ENCODE measurements at regions of chr12 and their contacts with region 1.

Region 1: DNA sequence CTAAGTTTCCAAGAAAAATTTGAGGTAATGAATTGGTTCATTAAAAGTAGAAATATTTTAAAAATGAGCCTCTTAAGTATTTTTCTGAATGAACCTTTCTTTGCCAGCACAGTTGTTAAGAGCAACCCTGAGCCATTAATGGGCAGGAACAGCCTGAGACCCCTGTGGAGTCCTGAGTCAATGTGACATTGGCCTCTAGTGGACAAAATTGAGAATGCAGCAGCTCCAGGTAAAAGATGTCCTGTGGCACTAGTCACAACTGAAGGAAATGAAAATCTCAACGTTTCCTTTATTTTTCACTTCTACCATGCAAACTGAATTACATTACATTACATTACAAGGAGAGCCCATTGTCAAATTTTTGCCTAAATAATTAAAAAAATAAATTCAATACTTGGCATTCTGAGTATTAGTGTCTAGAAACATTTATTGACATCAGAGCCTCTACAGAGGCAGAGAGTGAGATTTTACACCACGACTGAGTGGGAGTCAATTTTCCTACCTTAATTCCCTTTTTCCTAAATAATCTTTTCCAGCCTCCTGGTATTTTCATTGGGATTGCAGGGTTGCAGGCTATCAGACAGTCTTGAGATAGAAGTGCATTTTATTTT is 135.7 kb downstream of the PPM1H start:
- DNase-seq: no peak
- H3K4me3 ChIP-seq: no peak overlapping the region
- H3K27ac ChIP-seq: no peak overlapping the region
- H3K4me1 ChIP-seq: peaks cover 0 to 2% (median 0%) of the 10 kb centered on the region in 4 donors
- H3K27me3 ChIP-seq: no peaks in the 10 kb centered on the region
- CTCF ChIP-seq: peak; percentile 44 to 94 (median 87)
- EP300 ChIP-seq: no peak
- POLR2A ChIP-seq: no peak

Region 2: GRCh38 chr12:62435303-62436163 is 363.7 kb before region 1 on chr12:
- intact Hi-C with region 1: loop called (anchors 5 kb)
- DNase-seq: peak; percentile 65
- H3K4me3 ChIP-seq: peak overlapping the region; percentile 19 to 50 (median 42)
- H3K27ac ChIP-seq: no peak overlapping the region
- H3K4me1 ChIP-seq: peaks cover 0 to 15% (median 7%) of the 10 kb centered on the region in 4 donors
- H3K27me3 ChIP-seq: peaks cover 5 to 22% (median 11%) of the 10 kb centered on the region in 3 donors
- CTCF ChIP-seq: peak in 2 of 4 experiments; percentile 17 to 25
- EP300 ChIP-seq: no peak
- POLR2A ChIP-seq: no peak

Region 3: DNA sequence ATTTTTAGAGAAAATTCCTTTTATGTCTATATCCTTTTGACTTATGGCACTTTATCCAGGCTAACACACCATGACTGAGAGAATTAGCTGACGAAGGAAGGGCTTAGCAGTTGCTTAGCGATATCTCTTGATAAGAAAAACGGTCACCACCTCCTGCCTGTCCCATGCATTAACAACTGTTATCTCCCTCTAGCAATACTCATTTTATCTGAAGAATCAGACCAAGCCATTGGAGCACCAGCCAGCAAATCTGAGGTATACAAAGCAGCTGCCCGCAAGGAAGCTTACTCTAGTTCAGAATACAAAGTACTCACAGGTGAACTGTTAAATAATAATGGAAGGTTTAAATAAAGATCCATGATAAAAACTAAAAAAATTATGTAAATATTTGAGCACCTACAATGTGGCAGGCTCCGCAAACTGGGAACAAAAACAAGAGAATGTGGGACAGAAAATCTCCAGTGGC is 111.4 kb after region 1 on chr12:
- intact Hi-C with region 1: no loop called
- DNase-seq: no peak
- H3K4me3 ChIP-seq: no peak overlapping the region
- H3K27ac ChIP-seq: no peak overlapping the region
- H3K4me1 ChIP-seq: no peaks in the 10 kb centered on the region
- H3K27me3 ChIP-seq: no peaks in the 10 kb centered on the region
- CTCF ChIP-seq: no peak
- EP300 ChIP-seq: no peak
- POLR2A ChIP-seq: no peak

Measured in sigmoid colon (tissue), 7 donors.